ENCODE measurements at regions of chr12 and their contacts with region 1.

Region 1: GRCh38 chr12:48924617-48925303 is 532 bp downstream of the FKBP11 start:
- DNase-seq: peak; percentile 86
- CTCF ChIP-seq: peak; percentile 77

Region 2: GRCh38 chr12:48903982-48904411 is 20.8 kb before region 1 on chr12:
- CTCF ChIA-PET with region 1: interaction called, 37 read pairs
- POLR2A ChIA-PET with region 1: no interaction called
- DNase-seq: peak; percentile 80
- CTCF ChIP-seq: peak; percentile 70

Region 3: GRCh38 chr12:48910196-48910595 is 14.6 kb before region 1 on chr12:
- CTCF ChIA-PET with region 1: interaction called, 48 read pairs
- POLR2A ChIA-PET with region 1: interaction called, 8 read pairs
- DNase-seq: no peak
- CTCF ChIP-seq: no peak

Region 4: GRCh38 chr12:48936379-48936979 is 11.7 kb after region 1 on chr12:
- CTCF ChIA-PET with region 1: interaction called, 111 read pairs
- POLR2A ChIA-PET with region 1: interaction called, 4 read pairs
- DNase-seq: peak; percentile 85
- CTCF ChIP-seq: peak; percentile 92

Region 5: GRCh38 chr12:48946205-48946604 is 21.4 kb after region 1 on chr12:
- CTCF ChIA-PET with region 1: interaction called, 21 read pairs
- POLR2A ChIA-PET with region 1: no interaction called
- DNase-seq: no peak
- CTCF ChIP-seq: no peak

Region 6: DNA sequence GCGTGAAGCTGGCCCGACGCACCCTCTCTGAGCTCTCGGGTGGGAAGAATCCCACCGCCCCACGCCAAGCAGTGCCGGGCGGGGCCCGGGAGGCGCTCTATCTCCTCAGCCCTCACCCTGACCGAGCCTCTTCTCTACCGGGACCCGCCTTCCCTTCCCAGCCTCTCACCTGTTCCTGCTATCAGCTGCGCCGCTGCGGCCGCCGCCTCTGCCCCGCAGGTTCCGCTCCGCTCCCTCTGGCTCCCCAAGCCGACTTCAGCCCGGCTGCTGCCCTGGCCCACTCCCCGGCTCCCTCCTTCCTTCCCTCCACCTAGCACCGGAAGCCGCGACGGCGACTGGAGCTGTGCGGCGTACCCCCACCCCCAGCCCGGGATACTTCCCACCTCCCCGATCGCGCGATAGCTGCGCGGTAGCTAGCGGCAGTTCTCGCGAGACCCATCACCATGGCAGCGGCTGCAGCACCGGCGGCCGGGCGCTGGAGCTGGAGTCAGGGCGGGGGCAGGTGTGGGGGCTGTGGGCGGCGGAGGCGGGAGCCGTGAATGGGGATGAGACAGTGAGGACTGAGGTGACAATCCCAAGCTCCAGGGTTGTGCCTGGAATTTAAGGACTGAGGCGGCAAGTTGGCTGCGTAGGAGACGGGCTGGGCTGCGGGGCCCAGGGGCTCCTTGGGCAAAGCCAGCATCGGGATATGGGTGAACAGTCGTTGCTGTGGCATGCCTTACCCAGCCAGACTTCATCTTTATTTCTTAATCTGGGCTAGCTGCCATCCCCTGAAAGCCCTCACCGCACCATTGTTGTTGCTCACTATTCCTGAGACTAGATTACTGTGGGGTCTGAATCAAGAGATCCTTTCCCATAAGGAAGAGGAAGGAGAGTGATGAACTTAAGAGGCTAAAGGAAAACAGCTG is 32.6 kb after region 1 on chr12 and contains the start of gene ARF3:
- CTCF ChIA-PET with region 1: interaction called, 21 read pairs
- POLR2A ChIA-PET with region 1: interaction called, 3 read pairs
- DNase-seq: peak; percentile 97
- CTCF ChIP-seq: no peak

Region 7: DNA sequence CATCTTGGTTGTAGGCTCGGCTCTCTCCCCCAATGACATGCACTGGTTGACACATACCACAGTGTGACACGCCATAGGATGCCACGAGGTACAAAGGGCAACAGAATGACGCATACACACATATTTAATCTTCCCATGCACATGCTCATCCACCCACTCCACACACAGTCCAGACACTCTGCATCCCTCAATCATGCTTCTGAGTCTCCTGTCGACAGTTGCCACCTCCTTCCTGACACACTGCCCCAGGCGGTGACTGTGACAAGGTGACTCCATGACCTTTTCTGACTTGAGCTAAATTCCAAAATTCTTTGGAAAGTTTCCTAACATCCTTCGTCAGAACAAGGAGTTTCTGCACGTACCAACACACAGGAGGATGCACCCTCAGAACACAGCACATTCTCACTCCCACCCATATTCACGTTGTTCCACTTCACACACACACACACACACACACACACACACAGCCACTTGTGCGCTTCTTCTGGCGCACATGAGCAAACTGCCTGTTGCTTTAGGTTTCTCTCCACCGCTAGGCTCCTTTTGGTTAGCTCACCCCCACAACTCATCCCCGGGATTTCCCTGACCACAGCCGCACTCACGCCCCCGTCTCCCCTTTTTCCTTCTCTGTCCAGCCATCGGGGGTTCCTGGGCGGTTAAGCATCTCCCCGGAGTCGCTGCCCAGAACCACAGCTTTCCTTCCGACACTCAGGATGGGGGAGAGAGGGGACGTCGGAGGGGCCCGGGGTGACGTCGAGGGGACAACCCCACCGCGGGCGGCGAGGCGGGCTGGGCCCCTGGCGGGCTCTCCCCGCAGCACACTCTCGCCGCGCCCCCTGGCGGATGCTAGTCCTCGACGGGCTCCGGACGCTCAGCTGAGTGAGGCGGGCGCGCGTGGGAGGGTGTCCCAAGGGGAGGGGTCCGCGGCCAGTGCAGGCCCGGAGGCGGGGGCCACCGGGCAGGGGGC is 52.8 kb after region 1 on chr12:
- CTCF ChIA-PET with region 1: interaction called, 39 read pairs
- POLR2A ChIA-PET with region 1: no interaction called
- DNase-seq: peak; percentile 87
- CTCF ChIP-seq: peak; percentile 72

Measured in GM10248 (cell line).